ENCODE measurements at regions of chr15 and their contacts with region 1.

Region 1: DNA sequence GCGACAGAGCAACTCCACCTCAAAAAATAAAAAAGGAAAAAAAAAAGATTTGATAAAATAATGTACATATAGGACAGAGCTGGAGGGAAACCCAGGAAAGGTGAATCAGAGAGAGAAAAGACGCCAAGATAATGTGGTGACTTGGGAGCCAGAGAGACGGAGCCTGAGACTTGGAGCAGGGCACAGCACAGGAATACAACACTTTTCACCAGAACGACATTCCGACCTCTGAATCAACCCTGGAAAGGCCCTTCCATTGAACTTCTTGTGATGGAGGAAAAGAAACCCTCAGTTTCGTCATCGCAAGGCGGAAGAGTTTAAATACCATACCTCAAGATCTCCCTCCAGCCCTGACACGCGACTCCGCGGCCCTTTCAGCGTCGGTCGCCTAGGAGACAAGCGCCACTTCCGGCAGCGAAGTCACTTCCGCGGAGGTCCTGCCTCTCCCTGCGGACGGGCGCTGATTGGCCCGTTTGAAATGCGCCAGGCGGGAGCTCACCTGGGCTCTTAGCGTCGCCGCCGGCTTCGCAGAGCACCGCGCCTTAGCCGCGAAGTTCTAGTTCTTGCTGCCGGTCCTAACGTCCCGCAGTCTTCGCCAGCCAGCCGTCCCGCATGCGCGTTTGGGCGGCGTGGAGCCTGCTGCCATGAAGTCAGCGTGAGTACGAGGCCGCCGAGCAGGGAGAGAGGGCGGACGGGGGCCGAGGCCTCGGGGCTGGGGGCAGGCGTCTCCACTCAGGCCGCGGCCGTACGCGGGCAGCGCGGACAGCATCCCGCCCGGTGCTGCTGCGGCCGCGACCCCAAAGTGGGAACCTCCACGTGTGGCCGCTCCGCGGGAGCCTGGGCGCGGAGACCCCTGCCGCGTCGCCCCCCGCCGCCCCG is at the start of gene KIF23:
- DNase-seq: peak; percentile 96
- H3K4me3 ChIP-seq: peak within 1 kb of the TSS; percentile 76 to 87 (median 87)
- H3K27ac ChIP-seq: peak within 1 kb of the TSS; percentile 85
- H3K4me1 ChIP-seq: peaks cover 24% of the 10 kb centered on the region
- H3K27me3 ChIP-seq: no peaks in the 10 kb centered on the region
- CTCF ChIP-seq: no peak
- total RNA-seq, gene KIF23: 14.7 to 55.8 TPM

Region 2: GRCh38 chr15:69160141-69160993 is 253.7 kb before region 1 on chr15 and contains the start of gene GLCE:
- CTCF ChIA-PET with region 1: no interaction called
- dilution Hi-C with region 1: no loop called
- in situ Hi-C with region 1: no loop called
- intact Hi-C with region 1: loop called (anchors 5 kb)
- DNase-seq: peak; percentile 99
- H3K4me3 ChIP-seq: peak within 1 kb of the TSS; percentile 86 to 90 (median 88)
- H3K27ac ChIP-seq: peak within 1 kb of the TSS; percentile 84
- H3K4me1 ChIP-seq: peaks cover 10% of the 10 kb centered on the region
- H3K27me3 ChIP-seq: no peaks in the 10 kb centered on the region
- CTCF ChIP-seq: no peak
- total RNA-seq, gene GLCE: 10.0 to 18.7 TPM

Region 3: DNA sequence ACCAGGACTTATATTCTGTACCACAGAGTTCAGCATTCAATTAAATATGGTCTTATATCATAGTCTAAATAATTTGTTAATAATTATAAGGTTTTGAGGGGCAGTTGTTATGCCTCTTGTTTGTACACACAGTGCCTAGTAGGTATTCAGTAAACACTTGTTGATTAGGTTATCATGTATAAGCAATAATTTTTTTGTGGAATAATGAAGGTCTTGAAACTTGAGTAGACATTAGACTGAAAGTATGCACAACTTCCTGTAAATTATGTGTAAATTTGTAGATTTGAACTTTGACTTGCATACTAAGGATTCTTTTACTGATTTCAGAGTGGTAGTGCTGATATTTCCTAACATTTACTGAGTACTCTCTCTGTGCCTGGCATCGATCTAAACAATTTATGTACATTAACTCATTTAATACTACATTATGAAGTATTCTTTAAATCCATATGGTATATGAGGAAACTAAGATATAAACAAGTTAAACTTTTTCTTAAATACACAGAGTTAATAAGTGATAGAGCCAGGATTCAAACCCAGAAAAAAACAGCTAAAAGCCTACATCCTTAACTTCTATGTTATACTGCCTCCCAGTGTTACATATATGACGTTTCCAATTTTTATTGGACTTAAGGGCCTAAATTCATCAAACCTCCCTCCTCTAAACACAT is 188.6 kb before region 1 on chr15:
- CTCF ChIA-PET with region 1: interaction called, 5 read pairs
- dilution Hi-C with region 1: no loop called
- in situ Hi-C with region 1: no loop called
- intact Hi-C with region 1: loop called (anchors 5 kb)
- DNase-seq: peak; percentile 14
- H3K4me3 ChIP-seq: no peak overlapping the region
- H3K27ac ChIP-seq: no peak overlapping the region
- H3K4me1 ChIP-seq: peaks cover 6% of the 10 kb centered on the region
- H3K27me3 ChIP-seq: no peaks in the 10 kb centered on the region
- CTCF ChIP-seq: peak; percentile 16 to 42

Region 4: GRCh38 chr15:69265347-69265955 is 148.6 kb before region 1 on chr15:
- CTCF ChIA-PET with region 1: no interaction called
- dilution Hi-C with region 1: no loop called
- in situ Hi-C with region 1: no loop called
- intact Hi-C with region 1: loop called (anchors 1 kb)
- DNase-seq: peak; percentile 23
- H3K4me3 ChIP-seq: no peak overlapping the region
- H3K27ac ChIP-seq: no peak overlapping the region
- H3K4me1 ChIP-seq: no peaks in the 10 kb centered on the region
- H3K27me3 ChIP-seq: no peaks in the 10 kb centered on the region
- CTCF ChIP-seq: peak; percentile 33 to 61

Region 5: GRCh38 chr15:69394556-69395282 is 19.3 kb before region 1 on chr15:
- CTCF ChIA-PET with region 1: interaction called, 17 read pairs
- dilution Hi-C with region 1: no loop called
- in situ Hi-C with region 1: no loop called
- intact Hi-C with region 1: no loop called
- DNase-seq: peak; percentile 42
- H3K4me3 ChIP-seq: no peak overlapping the region
- H3K27ac ChIP-seq: peak overlapping the region; percentile 42
- H3K4me1 ChIP-seq: peaks cover 47% of the 10 kb centered on the region
- H3K27me3 ChIP-seq: no peaks in the 10 kb centered on the region
- CTCF ChIP-seq: peak; percentile 84 to 91

Region 6: GRCh38 chr15:69452692-69453521 is 38.8 kb after region 1 on chr15 and contains the start of gene RPLP1:
- CTCF ChIA-PET with region 1: no interaction called
- dilution Hi-C with region 1: no loop called
- in situ Hi-C with region 1: no loop called
- intact Hi-C with region 1: loop called (anchors 1 kb)
- DNase-seq: peak; percentile 90
- H3K4me3 ChIP-seq: peak within 1 kb of the TSS; percentile 85 to 88 (median 87)
- H3K27ac ChIP-seq: peak within 1 kb of the TSS; percentile 86
- H3K4me1 ChIP-seq: peaks cover 23% of the 10 kb centered on the region
- H3K27me3 ChIP-seq: no peaks in the 10 kb centered on the region
- CTCF ChIP-seq: no peak
- total RNA-seq, gene RPLP1: 152 to 1,750 TPM

Region 7: DNA sequence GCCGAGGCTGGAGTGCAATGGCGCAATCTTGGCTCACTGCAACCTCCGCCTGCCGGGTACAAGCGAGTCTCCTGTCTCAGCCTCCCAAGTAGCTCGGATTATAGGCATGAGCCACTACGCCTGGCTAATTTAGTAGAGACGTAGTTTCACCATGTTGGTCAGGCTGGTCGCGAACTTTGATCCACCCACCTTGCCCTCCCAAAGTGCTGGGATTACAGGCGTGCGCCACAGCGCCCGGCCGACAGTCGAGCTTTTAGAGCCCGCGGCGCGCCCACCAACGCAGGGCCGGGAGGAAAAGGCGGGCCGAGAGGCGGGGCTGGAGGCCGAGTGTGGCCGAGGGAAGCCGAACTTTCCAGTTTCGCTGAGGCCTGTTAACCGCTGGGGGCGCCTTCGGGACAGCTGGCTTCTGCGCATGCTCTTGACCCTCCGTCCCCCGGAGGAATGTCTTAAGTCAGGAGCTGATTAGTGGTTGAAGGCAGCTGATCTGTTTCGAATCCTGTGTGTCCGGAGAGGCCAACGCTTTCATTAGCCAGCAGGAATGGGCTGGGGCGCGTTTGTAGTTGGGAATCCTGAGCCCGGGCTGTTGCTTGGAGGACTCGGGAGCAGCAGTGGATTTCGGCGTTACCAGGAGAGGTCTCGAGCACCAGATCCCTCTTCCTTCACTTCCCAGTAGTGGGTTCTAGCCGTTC is 48.6 kb after region 1 on chr15:
- CTCF ChIA-PET with region 1: no interaction called
- dilution Hi-C with region 1: no loop called
- in situ Hi-C with region 1: no loop called
- intact Hi-C with region 1: loop called (anchors 2 kb)
- DNase-seq: peak; percentile 96
- H3K4me3 ChIP-seq: peak overlapping the region; percentile 57 to 66 (median 61)
- H3K27ac ChIP-seq: peak overlapping the region; percentile 92
- H3K4me1 ChIP-seq: peaks cover 22% of the 10 kb centered on the region
- H3K27me3 ChIP-seq: no peaks in the 10 kb centered on the region
- CTCF ChIP-seq: peak; percentile 86 to 89

Measured in mammary epithelial cell (primary cell).